ENCODE measurements at regions of chr19 and their contacts with region 1.

Region 1: DNA sequence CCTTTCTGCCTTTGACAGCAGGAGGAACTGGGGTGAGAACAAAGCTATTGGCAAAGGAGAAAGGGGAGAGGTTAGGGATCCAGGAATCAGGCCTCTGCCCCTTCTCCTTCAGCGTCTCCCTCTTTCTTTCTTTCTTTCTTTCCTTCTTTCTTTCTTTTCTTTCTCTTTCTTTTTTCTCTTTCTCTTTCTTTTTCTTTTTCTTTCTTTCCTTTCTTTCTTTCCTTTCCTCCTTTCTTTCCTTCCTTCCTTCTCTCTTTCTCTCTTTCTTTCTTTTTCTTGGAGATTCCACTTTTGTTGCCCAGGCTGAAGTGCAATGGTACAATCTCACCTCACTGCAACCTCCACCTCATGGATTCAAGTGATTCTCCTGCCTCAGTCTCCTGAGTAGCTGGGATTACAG is 75.6 kb downstream of the TRPM4 start:
- DNase-seq: no peak
- CTCF ChIP-seq: no peak

Region 2: DNA sequence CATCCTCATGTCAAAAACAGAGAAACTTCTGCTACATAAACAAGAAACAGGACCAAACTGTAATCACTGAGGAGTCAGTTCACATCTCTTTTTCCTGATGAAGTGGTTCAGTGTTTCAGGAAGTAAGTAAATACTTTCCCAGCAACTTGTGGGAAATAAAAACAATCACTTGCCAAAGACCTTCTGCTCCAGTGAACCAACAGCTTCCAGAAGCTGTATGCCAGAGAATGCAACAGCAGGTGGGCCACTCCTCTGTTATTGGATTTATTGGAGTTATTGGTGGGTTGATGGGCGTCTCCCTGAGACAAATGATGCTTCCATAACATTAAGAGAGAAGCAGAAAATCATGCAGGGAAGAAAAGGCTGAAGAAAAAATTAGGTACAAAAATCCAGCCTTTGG is 81.9 kb after region 1 on chr19:
- CTCF ChIA-PET with region 1: no interaction called
- POLR2A ChIA-PET with region 1: no interaction called
- DNase-seq: no peak
- CTCF ChIP-seq: no peak

Region 3: GRCh38 chr19:49331616-49332055 is 98.5 kb after region 1 on chr19:
- CTCF ChIA-PET with region 1: no interaction called
- POLR2A ChIA-PET with region 1: interaction called, 10 read pairs
- DNase-seq: peak; percentile 74
- CTCF ChIP-seq: no peak

Region 4: DNA sequence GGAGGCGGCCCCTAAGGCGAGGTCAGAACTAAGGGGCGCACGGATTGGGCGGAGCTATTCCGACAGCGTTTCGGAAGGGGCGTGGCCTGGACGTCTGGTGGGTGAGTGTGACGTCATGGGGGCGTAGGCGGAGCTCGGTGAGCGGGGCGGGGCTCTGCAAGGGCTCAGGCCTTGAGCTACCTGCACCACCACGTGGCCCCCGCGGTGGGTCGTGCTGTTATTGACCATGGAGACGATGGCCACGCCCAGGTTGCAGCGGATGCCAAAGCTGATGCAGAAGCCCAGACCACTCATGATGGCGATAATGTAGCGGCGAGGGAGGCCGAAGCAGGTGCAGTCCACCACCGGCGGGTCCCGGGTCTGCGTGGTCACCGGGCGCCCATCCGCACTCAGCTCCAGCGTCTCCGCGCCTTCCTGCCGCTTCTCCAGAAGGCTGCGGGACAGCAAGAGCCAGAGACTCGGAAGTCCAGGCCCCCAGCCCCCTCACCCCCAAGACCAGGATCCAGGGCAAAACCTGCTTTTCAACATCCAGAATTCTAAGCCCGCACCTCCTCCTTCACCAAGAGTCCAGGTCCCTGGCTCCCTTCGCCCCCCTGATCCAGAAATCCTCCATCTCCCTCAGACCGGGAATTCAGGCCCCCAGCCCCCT is 203.3 kb after region 1 on chr19:
- CTCF ChIA-PET with region 1: no interaction called
- POLR2A ChIA-PET with region 1: no interaction called
- DNase-seq: peak; percentile 49
- CTCF ChIP-seq: no peak